ENCODE measurements at regions of chr1 and their contacts with region 1.

Region 1: GRCh38 chr1:65209005-65209885 is 61.2 kb downstream of the AK4 start:
- DNase-seq: no peak
- ATAC-seq: peak; percentile 60 to 61
- H3K4me3 ChIP-seq: no peak overlapping the region
- H3K27ac ChIP-seq: no peak overlapping the region
- H3K4me1 ChIP-seq: peaks cover 3% of the 10 kb centered on the region
- H3K27me3 ChIP-seq: no peaks in the 10 kb centered on the region

Region 2: GRCh38 chr1:65009724-65010420 is 199.4 kb before region 1 on chr1:
- intact Hi-C with region 1: no loop called
- DNase-seq: no peak
- ATAC-seq: no peak
- H3K4me3 ChIP-seq: no peak overlapping the region
- H3K27ac ChIP-seq: no peak overlapping the region
- H3K4me1 ChIP-seq: no peaks in the 10 kb centered on the region
- H3K27me3 ChIP-seq: no peaks in the 10 kb centered on the region

Region 3: DNA sequence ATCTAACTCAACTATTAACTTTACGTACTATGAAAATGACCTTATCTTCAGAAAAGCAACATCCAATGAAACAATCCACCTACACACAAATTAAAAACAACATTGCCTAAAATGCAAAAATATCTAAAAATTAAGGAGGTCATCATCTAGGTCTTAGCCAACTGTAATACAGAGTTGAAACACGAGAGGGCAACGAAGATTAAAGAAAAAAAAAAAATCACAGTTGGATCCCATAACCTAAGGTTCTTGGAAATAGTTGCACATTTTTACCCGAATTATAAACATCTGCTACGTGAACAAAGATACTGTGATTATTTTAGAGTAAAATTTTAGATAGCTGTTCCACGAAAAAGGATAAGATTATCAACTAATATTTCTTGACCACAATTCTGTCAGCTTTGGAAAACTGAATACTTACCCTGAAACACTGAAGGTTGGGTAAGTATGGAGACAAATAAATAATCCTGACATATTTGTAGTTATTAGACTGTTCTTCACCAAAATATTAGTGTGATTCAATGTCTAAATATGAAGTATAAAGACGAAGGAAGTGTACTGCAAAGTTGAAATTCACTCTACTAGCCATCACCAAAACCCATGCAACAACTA is 149.2 kb before region 1 on chr1:
- intact Hi-C with region 1: loop called (anchors 2 to 10 kb)
- DNase-seq: no peak
- ATAC-seq: peak in 1 of 2 donors; percentile 43
- H3K4me3 ChIP-seq: peak overlapping the region; percentile 10
- H3K27ac ChIP-seq: no peak overlapping the region
- H3K4me1 ChIP-seq: peaks cover 4% of the 10 kb centered on the region
- H3K27me3 ChIP-seq: no peaks in the 10 kb centered on the region

Region 4: GRCh38 chr1:65067491-65068201 is 141.6 kb before region 1 on chr1:
- intact Hi-C with region 1: loop called in 3 of 4 experiments (anchors 5 to 10 kb)
- DNase-seq: peak; percentile 65 to 90 (median 88)
- ATAC-seq: peak; percentile 61 to 66
- H3K4me3 ChIP-seq: peak overlapping the region; percentile 88
- H3K27ac ChIP-seq: peak overlapping the region; percentile 100
- H3K4me1 ChIP-seq: no peaks in the 10 kb centered on the region
- H3K27me3 ChIP-seq: no peaks in the 10 kb centered on the region

Region 5: DNA sequence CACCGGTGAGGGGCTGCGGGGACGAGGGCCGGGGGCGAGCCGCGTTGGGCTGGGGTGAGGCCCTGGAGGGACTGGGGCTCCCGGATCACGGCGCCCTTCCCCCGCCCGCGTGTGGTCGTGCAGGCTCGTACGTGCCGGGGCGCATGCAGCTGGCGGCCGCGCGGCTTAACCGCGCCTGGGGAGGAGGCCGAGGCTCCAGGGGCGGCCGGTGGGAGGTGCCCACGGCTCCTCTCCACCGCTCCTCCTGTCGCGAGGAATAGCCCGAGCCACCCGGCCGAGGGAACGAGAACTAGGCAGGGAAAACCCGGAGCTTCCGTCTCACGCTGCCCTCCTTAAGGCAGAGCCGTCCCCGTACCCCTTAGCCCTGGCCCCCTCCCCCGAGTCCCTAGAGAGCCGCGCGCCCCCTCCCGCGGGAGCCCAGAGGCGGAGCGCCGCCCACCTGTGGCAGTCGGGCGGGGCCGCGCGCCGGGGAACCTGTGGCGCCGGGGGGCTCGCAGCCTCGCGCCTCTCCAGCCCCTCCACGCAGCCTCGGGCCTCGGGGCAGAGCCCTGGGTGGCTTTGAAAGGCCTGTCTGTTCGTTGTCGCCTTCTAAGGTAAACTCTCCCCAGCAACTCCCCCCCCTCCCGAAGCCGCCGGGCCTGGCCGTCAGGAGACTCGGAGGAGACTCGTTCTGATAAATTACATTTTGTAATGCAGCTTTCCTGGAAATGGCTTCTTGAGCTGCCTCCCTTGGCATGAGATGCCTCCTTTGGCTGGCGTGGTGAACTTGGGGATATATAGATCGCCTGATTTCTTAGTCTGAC is 60.5 kb before region 1 on chr1:
- intact Hi-C with region 1: loop called in 3 of 4 experiments (anchors 2 to 10 kb)
- DNase-seq: peak; percentile 60 to 82 (median 81)
- ATAC-seq: peak; percentile 80 to 82
- H3K4me3 ChIP-seq: peak overlapping the region; percentile 63
- H3K27ac ChIP-seq: peak overlapping the region; percentile 76
- H3K4me1 ChIP-seq: peaks cover 6% of the 10 kb centered on the region
- H3K27me3 ChIP-seq: no peaks in the 10 kb centered on the region

Measured in right cardiac atrium (tissue), 5 donors.